A549 (cell line): ENCODE measurements at regions of chr20 and their contacts with region 1.

Region 1: GRCh38 chr20:54103067-54103761 is 32.8 kb upstream of the BCAS1 start:
- DNase-seq: peak in 1 of 2 experiments; percentile 90
- ATAC-seq: peak; percentile 58 to 66; a peak in 4 of 6 replicates
- H3K4me3 ChIP-seq: no peak overlapping the region
- H3K27ac ChIP-seq: peak overlapping the region; percentile 92 to 98
- H3K4me1 ChIP-seq: peaks cover 65% of the 10 kb centered on the region
- CTCF ChIP-seq: peak; percentile 86
- EP300 ChIP-seq: no peak
- POLR2A ChIP-seq: no peak
- RAD21 ChIP-seq: peak; percentile 76 to 81

Region 2: GRCh38 chr20:54123587-54124180 is 20.5 kb after region 1 on chr20:
- CTCF ChIA-PET with region 1: interaction called, 20 read pairs
- POLR2A ChIA-PET with region 1: interaction called, 3 read pairs
- DNase-seq: peak; percentile 93 to 100
- ATAC-seq: peak; percentile 95 to 98
- H3K4me3 ChIP-seq: no peak overlapping the region
- H3K27ac ChIP-seq: peak overlapping the region; percentile 96 to 98
- H3K4me1 ChIP-seq: peaks cover 86% of the 10 kb centered on the region
- CTCF ChIP-seq: no peak
- EP300 ChIP-seq: peak; percentile 100
- POLR2A ChIP-seq: no peak
- RAD21 ChIP-seq: peak; percentile 44 to 60

Region 3: DNA sequence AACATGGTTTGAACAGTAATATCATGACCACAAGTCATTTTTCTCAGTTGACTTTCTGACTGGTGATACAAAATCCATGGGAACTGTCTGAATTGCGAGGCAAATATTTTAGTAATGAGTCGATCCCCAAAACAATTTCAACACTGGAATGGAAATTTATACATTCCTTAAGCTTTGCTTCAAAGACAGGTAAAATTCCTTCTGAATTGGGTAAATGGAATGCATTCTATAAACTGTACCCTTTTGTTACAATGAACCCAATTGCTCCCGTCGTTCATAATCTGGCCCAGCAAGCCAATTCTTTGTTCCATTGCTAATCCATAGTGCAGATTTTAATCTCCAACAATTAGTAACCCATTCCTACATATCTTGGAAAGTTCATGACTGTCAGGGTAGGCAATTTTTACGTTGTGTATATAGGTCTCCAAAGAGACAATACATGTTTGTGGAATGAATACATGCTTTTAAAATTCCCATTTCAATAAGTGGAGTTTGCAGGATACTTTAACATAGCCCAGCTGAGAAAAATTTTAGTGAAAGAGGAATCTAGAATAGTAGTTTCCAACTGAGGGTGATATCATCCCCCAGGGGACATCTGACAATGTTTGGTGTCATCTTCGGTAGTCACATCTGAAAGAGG is 37.8 kb after region 1 on chr20:
- CTCF ChIA-PET with region 1: interaction called, 13 read pairs
- POLR2A ChIA-PET with region 1: no interaction called
- DNase-seq: peak in 1 of 2 experiments; percentile 78
- ATAC-seq: peak; percentile 56 to 67; a peak in 5 of 6 replicates
- H3K4me3 ChIP-seq: no peak overlapping the region
- H3K27ac ChIP-seq: peak overlapping the region; percentile 75 to 88
- H3K4me1 ChIP-seq: peaks cover 53% of the 10 kb centered on the region
- CTCF ChIP-seq: no peak
- EP300 ChIP-seq: peak; percentile 73 to 93; a peak in 4 of 5 replicates
- POLR2A ChIP-seq: no peak
- RAD21 ChIP-seq: no peak; a peak in 1 of 5 replicates

Region 4: DNA sequence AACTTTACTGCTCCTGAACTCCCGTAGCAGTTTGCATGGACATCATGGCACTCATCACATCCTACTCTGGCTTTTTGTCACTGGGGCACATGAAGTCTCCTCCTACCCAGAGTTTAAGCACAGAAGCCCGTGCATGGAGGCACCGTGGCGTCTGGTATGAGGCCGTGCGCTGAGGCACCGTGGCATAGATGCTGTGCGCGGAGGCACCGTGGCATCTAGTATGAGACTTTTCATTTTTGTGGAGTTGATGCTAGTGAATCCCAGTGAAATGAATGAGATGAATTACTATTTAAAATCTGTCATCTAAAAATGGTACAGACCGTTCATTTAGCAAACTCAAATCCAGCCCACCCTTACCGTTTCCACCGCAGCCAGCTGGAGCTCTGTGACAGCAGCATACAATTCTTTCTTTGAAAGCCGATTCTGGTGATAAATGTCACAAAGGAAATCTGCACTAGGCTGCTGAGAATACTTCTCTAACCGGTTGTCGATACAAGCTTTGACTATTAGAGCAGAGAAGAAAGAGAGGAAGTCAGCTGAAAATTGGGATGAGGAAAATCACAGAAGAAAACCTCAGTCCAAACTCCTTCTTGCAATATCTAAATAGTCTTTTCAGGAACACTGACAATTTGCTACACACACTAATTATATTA is 59.3 kb after region 1 on chr20:
- CTCF ChIA-PET with region 1: interaction called, 37 read pairs
- POLR2A ChIA-PET with region 1: interaction called, 3 read pairs
- DNase-seq: peak in 1 of 2 experiments; percentile 47
- ATAC-seq: peak in 1 of 2 experiments; percentile 0; a peak in 3 of 6 replicates
- H3K4me3 ChIP-seq: peak overlapping the region; percentile 20
- H3K27ac ChIP-seq: peak overlapping the region; percentile 93 to 100
- H3K4me1 ChIP-seq: peaks cover 100% of the 10 kb centered on the region
- CTCF ChIP-seq: no peak
- EP300 ChIP-seq: no peak
- POLR2A ChIP-seq: no peak
- RAD21 ChIP-seq: no peak

Region 5: DNA sequence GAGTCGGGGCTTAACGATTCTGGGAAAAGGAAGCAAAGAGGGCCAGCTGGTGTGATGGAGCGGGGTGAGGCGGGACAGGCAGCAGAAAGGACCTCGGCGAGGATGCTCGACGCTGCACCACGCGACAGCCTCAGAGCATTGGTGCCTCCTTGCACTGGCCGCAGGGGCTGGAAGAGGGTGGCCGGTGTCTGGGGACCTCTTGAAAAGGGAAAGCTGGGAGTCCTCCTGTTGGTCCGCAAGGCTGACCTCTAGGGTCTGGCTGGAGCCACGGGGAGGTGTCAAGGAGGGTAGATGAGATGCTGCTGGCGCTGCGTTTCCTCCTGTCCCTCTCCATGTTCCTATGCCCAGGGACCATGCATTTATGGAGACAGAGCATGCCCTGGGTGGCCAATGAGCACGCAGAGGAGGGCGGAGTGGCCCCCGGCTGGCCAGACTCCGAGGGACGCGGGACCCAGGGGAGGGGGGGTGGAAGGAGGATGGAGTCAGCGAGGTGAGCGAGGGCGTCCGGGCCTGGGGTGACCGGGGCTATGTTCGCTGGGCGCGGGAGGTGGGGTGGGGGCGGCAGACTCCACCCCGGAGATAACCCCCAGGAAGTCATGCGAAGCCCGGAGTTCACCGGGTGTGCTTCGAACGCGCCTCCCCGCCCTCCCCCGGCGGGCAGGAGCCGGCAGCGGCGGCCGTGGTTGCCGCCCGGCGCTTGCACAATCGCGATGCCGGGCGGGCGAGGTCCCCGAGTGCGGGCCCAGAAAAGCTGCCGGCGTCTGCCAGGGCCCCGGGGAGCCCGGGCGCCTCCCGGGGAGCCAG is 70.6 kb after region 1 on chr20 and contains the start of gene CYP24A1:
- CTCF ChIA-PET with region 1: interaction called, 37 read pairs
- POLR2A ChIA-PET with region 1: interaction called, 5 read pairs
- DNase-seq: peak; percentile 97 to 98
- ATAC-seq: peak; percentile 87
- H3K4me3 ChIP-seq: peak within 1 kb of the TSS; percentile 83
- H3K27ac ChIP-seq: peak within 1 kb of the TSS; percentile 93 to 100
- H3K4me1 ChIP-seq: peaks cover 43% of the 10 kb centered on the region
- CTCF ChIP-seq: no peak
- EP300 ChIP-seq: peak; percentile 92; a peak in 4 of 5 replicates
- POLR2A ChIP-seq: peak; percentile 100
- RAD21 ChIP-seq: no peak
- polyA plus RNA-seq, gene CYP24A1: 1,617 and 1,630 TPM in 2 replicates

Region 6: DNA sequence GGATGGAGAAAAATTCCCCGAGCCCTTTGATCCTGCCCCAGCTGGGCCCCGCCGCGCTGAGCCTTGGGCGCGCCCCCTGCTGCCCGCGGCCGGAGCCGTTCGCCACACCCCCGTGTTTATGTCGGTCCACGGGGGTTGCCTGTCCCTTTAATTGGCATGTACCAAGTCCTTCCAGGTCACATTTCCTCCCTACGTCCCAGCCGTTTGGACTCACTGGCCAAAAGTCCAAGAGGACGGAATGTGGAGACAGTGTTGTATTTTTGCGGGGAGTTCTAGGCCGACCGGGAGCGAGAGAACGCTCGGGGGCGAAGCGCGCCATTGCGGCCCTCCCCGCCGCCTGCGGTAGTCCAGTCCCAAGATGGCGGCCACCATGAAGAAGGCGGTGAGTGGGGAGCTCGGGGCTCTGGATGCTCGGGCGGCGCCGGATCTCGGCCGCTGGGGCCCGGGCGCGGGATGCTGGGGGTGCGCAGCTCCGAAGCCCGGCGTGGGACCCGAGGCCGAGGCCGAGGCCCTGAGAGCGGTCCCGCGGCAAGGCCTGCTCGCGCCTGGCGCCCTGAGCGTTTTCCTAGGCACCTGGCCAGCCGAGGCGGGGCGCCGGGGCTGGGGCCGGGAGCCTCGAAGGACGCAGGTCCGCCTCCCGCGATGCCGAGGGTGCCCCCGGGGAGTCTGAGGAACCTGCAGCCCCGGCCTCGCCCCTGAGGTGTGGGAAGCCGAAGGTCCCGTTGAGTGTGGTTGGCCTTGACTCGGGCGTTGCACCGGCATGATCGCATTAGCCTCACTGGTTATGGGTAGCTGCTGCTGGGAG is 104.7 kb after region 1 on chr20 and contains the start of gene PFDN4:
- CTCF ChIA-PET with region 1: interaction called, 655 read pairs
- POLR2A ChIA-PET with region 1: no interaction called
- DNase-seq: peak; percentile 89 to 93
- ATAC-seq: peak; percentile 96 to 98
- H3K4me3 ChIP-seq: peak within 1 kb of the TSS; percentile 69
- H3K27ac ChIP-seq: peak within 1 kb of the TSS; percentile 97 to 99
- H3K4me1 ChIP-seq: peaks cover 13% of the 10 kb centered on the region
- CTCF ChIP-seq: peak; percentile 80
- EP300 ChIP-seq: no peak
- POLR2A ChIP-seq: peak; percentile 42; the same call in 1 of the 2 replicates
- RAD21 ChIP-seq: peak; percentile 43 to 45; a peak in 4 of 5 replicates
- polyA plus RNA-seq, gene PFDN4: 78.7 and 146 TPM in 2 replicates